ENCODE measurements at regions of chr4 and their contacts with region 1.

Region 1: GRCh38 chr4:52983563-52984303 is 121.6 kb downstream of the RASL11B start:
- DNase-seq: no peak
- H3K4me3 ChIP-seq: no peak overlapping the region
- H3K27ac ChIP-seq: no peak overlapping the region
- H3K4me1 ChIP-seq: no peaks in the 10 kb centered on the region
- H3K27me3 ChIP-seq: no peaks in the 10 kb centered on the region
- CTCF ChIP-seq: peak; percentile 63 to 77

Region 2: DNA sequence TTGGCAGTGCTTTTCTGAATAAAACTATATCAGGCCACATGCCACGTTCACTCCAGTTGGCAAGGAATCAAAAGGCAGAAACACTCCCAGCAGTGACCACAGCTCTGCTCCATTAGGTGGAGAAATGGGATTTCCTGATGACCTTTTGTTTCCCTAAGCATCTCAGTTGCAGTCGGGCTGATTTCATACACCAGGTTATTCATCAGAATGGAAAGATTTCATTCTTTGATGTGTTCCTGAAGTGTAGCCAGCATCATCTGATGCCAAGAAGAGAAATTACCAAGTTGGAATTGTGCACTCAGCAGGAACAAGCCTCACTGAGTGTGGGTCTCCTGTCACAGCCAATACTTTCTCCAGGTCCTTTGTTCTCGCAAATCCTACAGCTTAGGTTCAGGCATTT is 738.9 kb before region 1 on chr4:
- intact Hi-C with region 1: loop called (anchors 10 kb)
- DNase-seq: no peak
- H3K4me3 ChIP-seq: no peak overlapping the region
- H3K27ac ChIP-seq: no peak overlapping the region
- H3K4me1 ChIP-seq: peaks cover 3 to 23% (median 8%) of the 10 kb centered on the region in 4 donors
- H3K27me3 ChIP-seq: no peaks in the 10 kb centered on the region
- CTCF ChIP-seq: no peak

Region 3: DNA sequence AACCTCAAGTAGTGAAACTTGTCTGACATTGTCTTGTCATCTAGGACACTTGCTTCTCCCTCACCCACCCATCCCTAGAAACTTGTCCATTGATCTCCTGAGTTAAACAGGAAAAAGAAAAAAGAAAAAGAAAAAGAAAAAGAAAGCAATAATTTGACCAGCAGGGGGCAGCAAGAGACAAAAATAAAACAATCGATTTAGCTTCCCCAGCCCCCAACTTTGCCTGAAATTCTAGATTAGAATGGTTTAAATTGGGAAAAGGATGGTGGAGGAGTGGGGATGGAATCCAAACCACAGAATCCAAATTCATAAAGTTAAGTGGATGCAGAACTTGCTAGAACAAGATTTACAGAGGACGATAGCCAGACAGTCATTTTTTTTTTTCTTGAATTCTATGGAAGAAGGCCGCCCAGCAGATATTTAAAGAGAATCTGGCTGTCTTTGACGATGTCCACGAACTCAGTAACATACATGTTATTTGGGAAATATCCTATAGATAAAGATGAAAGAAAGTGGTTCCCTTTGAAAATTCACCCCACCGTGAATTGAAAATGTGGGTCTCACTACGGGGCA is 607.5 kb before region 1 on chr4:
- intact Hi-C with region 1: loop called (anchors 10 kb)
- DNase-seq: no peak
- H3K4me3 ChIP-seq: no peak overlapping the region
- H3K27ac ChIP-seq: no peak overlapping the region
- H3K4me1 ChIP-seq: no peaks in the 10 kb centered on the region
- H3K27me3 ChIP-seq: no peaks in the 10 kb centered on the region
- CTCF ChIP-seq: peak; percentile 50 to 68

Region 4: GRCh38 chr4:52545099-52546069 is 438.3 kb before region 1 on chr4:
- intact Hi-C with region 1: loop called (anchors 2 kb)
- DNase-seq: peak; percentile 79 to 80
- H3K4me3 ChIP-seq: no peak overlapping the region
- H3K27ac ChIP-seq: no peak overlapping the region
- H3K4me1 ChIP-seq: no peaks in the 10 kb centered on the region
- H3K27me3 ChIP-seq: no peaks in the 10 kb centered on the region
- CTCF ChIP-seq: peak; percentile 84 to 88

Region 5: GRCh38 chr4:52861879-52862616 is 121.7 kb before region 1 on chr4 and contains the start of gene RASL11B:
- intact Hi-C with region 1: loop called (anchors 10 kb)
- DNase-seq: peak; percentile 82 to 92
- H3K4me3 ChIP-seq: peak within 1 kb of the TSS; percentile 71 to 78
- H3K27ac ChIP-seq: peak within 1 kb of the TSS; percentile 77 to 86
- H3K4me1 ChIP-seq: peaks cover 0 to 46% (median 23%) of the 10 kb centered on the region in 4 donors
- H3K27me3 ChIP-seq: no peaks in the 10 kb centered on the region
- CTCF ChIP-seq: peak; percentile 45 to 52

Region 6: DNA sequence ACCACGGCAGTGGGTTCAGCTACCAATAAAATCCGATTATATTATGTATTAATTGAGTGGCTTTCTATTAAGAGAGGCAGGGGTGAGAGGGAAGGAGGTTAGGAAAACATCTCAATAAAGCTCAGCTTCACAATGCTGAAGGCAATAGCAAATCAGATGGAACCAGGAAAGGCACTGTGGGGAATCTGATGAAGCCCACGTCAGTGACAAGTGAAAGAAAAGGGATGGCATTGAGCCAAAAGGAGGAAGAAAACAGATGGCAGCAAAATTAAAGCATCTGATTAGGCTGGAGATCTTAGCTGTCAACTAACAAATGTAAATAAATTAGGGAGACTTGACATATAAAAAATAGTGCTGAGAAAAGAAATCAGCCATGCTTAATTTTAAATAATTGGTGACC is 59.3 kb after region 1 on chr4:
- intact Hi-C with region 1: no loop called
- DNase-seq: no peak
- H3K4me3 ChIP-seq: no peak overlapping the region
- H3K27ac ChIP-seq: no peak overlapping the region
- H3K4me1 ChIP-seq: peaks cover 0 to under 1% (median 0%) of the 10 kb centered on the region in 4 donors
- H3K27me3 ChIP-seq: no peaks in the 10 kb centered on the region
- CTCF ChIP-seq: no peak